Right cardiac atrium (tissue), 5 donors: ENCODE measurements at regions of chr17 and their contacts with region 1.

Region 1: GRCh38 chr17:1673041-1673785 is 11.5 kb downstream of the PRPF8 start:
- DNase-seq: no peak
- ATAC-seq: no peak
- H3K4me3 ChIP-seq: no peak overlapping the region
- H3K27ac ChIP-seq: no peak overlapping the region
- H3K4me1 ChIP-seq: peaks cover 2% of the 10 kb centered on the region
- H3K27me3 ChIP-seq: no peaks in the 10 kb centered on the region

Region 2: GRCh38 chr17:1714427-1714979 is 41.3 kb after region 1 on chr17:
- intact Hi-C with region 1: loop called in 1 of 4 experiments (anchors 5 kb)
- DNase-seq: peak; percentile 99 to 100 (median 99)
- ATAC-seq: peak; percentile 58 to 68
- H3K4me3 ChIP-seq: peak overlapping the region; percentile 90
- H3K27ac ChIP-seq: peak overlapping the region; percentile 97
- H3K4me1 ChIP-seq: peaks cover 10% of the 10 kb centered on the region
- H3K27me3 ChIP-seq: no peaks in the 10 kb centered on the region

Region 3: DNA sequence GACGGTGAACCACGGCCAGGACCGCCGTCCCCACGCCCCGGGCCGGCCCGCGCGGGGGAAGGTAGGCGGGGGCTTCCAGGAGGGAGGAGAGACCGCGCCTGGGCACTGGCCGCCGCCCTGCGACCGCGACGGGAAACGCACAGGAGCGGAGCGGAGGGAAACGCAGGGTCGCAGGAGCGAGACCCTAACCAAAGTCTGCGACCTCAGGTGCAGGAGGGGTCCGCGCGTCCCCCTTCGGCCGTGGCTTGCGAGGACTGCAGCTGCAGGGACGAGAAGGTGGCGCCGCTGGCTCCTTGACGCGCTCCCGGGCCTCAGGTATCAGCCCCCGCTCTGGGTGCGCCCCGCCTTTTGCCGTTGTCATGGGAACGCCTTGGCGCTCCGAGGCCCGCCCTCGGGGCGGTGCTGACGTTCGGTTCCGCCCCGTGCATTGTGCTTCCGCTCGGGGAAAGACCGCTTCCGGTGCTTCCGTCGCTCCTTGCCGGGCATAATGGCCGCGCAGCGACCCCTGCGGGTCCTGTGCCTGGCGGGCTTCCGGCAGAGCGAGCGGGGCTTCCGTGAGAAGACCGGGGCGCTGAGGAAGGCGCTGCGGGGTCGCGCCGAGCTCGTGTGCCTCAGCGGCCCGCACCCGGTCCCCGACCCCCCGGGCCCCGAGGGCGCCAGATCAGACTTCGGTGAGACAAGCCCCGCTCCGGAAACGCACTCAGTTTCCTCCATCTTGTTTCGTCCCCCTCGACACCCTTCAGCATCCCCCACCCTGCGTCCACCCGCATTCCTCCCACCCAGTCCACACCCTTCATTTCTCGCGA is 368.6 kb after region 1 on chr17 and contains the start of gene OVCA2:
- intact Hi-C with region 1: loop called in 2 of 4 experiments (anchors 10 kb)
- DNase-seq: peak; percentile 97 to 98 (median 97)
- ATAC-seq: peak; percentile 94 to 96
- H3K4me3 ChIP-seq: peak within 1 kb of the TSS; percentile 61
- H3K27ac ChIP-seq: peak within 1 kb of the TSS; percentile 83
- H3K4me1 ChIP-seq: no peaks in the 10 kb centered on the region
- H3K27me3 ChIP-seq: no peaks in the 10 kb centered on the region
- total RNA-seq, gene OVCA2: 15.3 to 29.4 (median 20.5) TPM

Region 4: DNA sequence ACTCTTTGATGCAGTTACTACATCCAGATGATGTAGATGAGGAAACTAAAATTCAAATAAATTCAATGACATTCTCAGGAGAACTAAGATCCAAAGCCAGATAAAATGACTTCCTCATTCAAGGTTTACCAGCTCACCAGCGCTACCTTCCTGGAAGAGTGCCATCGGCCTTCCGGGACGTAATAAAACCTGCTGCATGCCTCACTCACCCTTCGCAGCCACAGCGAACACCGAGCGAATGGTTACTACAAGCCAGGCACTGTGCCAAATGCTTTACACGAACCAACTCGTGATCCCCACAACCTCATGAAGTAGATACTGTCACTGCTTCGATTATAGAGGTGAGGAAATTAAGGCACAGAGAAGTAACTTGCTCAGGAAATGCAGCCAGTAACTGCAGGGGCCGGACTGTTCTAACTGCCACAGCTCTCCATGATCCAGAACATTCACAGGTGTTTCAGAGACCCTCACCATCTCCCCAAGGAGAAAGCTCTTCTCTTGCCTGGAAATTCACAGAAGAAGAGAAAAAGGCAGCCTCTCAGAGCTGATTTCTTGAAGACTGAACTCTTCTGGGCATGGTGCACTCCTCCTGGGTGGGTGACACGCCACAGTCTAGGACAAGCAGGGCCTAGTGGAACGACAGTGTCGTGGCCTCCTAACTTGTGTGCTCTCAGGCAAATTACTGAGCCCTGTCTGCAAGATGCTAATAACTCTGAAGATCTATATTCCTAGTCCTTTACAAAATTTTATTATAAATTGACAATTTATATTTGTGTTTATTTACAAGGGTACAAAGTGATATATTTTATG is 428.4 kb after region 1 on chr17:
- intact Hi-C with region 1: no loop called
- DNase-seq: no peak
- ATAC-seq: no peak
- H3K4me3 ChIP-seq: no peak overlapping the region
- H3K27ac ChIP-seq: no peak overlapping the region
- H3K4me1 ChIP-seq: peaks cover 10% of the 10 kb centered on the region
- H3K27me3 ChIP-seq: no peaks in the 10 kb centered on the region